PC-3 (cell line): ENCODE measurements at regions of chr14 and their contacts with region 1.

Region 1: DNA sequence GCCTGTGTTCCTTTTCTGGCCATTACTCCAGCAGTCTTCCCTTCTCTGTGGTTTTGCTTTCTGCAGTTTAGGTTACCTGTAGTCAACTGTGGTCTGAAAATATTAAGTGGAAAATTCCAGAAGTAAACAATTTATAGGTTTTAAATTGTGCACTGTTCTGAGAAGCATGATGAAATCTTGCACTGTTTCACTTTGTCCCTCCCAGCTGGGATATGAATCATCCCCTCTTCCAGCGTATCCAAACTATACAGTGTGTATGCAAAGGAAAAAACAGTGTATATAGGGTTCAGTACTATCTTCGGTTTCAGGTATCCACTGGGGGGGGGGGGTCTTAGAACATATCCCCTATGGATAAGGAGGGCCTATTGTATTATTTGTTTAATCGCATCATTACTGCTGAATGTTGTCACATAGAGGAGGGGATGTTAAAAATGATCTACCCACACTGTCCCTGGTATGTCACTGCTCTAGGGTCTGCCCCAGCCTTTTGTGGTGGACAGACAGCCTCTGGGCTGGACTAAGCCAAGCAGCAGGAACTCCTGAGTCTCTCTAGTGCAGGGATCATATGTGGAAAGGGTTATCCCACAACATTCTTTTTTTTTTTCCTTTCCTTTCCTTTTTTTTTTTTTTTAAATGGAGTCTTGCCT is 109.1 kb upstream of the MAX start:
- DNase-seq: peak; percentile 85
- ATAC-seq: peak; percentile 97
- H3K4me3 ChIP-seq: peak overlapping the region; percentile 20; the same call in 1 of the 2 replicates
- H3K27ac ChIP-seq: peak overlapping the region; percentile 51
- H3K4me1 ChIP-seq: peaks cover 31% of the 10 kb centered on the region
- H3K27me3 ChIP-seq: no peaks in the 10 kb centered on the region
- CTCF ChIP-seq: no peak

Region 2: DNA sequence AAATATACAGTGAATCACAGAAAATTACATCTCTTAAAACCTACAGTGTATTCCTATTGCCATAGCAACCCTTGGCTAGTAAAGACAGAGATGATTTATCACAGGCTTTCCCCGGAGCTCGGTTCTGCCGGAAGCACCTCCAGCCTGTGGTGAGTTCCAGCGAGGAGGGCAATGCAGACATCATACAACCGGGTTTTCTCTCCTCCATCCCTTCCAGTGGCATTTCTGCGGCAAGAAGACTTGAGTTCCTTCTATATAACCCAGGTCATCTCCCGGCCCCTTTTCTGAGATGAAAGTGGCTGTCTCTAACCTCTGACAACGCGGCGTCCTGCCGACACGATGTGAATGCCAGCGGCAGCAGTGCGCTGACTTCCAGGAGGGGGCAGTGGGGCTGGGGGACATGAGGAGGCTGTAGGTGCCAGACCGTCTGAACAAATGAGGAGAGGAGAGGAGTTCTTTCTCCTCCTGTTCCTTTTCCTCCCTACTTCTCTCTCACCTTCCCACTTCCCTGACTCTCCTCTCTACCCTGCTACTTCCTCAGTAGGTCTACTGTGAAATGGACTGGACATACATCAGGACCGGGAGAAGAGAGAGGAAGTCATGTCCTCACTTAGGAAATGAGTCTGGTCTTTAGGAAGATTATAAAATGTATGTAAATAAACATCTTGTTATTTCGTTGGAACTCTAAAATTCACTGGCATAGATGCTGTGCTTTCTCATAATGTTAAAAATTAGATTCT is 40.5 kb before region 1 on chr14:
- CTCF ChIA-PET with region 1: no interaction called
- POLR2A ChIA-PET with region 1: no interaction called
- intact Hi-C with region 1: loop called (anchors 2 kb)
- DNase-seq: peak; percentile 80
- ATAC-seq: peak; percentile 86
- H3K4me3 ChIP-seq: peak overlapping the region; percentile 65
- H3K27ac ChIP-seq: peak overlapping the region; percentile 56
- H3K4me1 ChIP-seq: peaks cover 18% of the 10 kb centered on the region
- H3K27me3 ChIP-seq: no peaks in the 10 kb centered on the region
- CTCF ChIP-seq: peak; percentile 76

Region 3: DNA sequence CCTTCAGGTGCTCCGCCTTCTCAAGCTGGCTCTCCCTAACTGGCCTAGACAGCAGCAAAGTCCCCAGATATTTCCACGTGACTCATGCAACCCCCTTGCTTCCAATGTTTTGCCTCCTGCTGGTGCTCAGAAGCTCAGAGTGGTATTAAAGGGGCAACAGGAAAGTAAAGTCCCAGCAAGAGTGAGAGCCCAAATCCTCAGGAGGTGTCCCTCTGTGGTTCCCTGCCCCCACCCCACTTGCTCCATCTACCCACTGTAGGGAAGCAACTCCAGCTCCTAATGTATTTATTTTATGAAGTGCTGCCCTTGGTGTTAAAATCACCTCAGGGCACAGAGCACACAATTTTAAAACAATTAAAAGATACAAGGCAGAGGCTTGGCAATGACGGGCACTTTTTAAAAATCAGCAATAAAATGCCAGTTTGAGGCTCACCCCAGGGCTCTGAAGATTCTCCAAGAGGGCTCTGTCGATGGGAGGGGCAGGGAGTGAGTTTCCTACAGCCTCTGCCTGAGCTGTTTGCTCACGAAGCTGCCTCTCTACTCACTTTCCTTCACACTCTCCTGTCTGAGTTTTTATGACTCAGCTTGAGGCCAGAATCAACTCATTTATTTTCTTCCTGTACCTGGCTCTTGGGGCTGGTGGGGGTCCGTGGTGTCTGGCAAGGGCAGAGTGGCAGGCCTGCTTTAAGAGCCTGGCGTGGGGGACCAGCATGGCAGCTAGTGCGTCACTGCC is 27.3 kb before region 1 on chr14:
- CTCF ChIA-PET with region 1: no interaction called
- POLR2A ChIA-PET with region 1: no interaction called
- intact Hi-C with region 1: loop called (anchors 2 kb)
- DNase-seq: peak; percentile 68
- ATAC-seq: peak; percentile 81
- H3K4me3 ChIP-seq: no peak overlapping the region
- H3K27ac ChIP-seq: no peak overlapping the region
- H3K4me1 ChIP-seq: peaks cover 26% of the 10 kb centered on the region
- H3K27me3 ChIP-seq: no peaks in the 10 kb centered on the region
- CTCF ChIP-seq: no peak

Region 4: GRCh38 chr14:65290830-65291229 is 79.4 kb after region 1 on chr14:
- CTCF ChIA-PET with region 1: no interaction called
- POLR2A ChIA-PET with region 1: no interaction called
- intact Hi-C with region 1: loop called (anchors 1 kb)
- DNase-seq: peak; percentile 99
- ATAC-seq: peak; percentile 95
- H3K4me3 ChIP-seq: no peak overlapping the region
- H3K27ac ChIP-seq: peak overlapping the region; percentile 96
- H3K4me1 ChIP-seq: peaks cover 20% of the 10 kb centered on the region
- H3K27me3 ChIP-seq: no peaks in the 10 kb centered on the region
- CTCF ChIP-seq: no peak

Region 5: GRCh38 chr14:65462411-65462810 is 250.9 kb after region 1 on chr14:
- CTCF ChIA-PET with region 1: no interaction called
- POLR2A ChIA-PET with region 1: no interaction called
- intact Hi-C with region 1: no loop called
- DNase-seq: peak; percentile 32
- ATAC-seq: peak; percentile 37
- H3K4me3 ChIP-seq: no peak overlapping the region
- H3K27ac ChIP-seq: no peak overlapping the region
- H3K4me1 ChIP-seq: peaks cover 13% of the 10 kb centered on the region
- H3K27me3 ChIP-seq: no peaks in the 10 kb centered on the region
- CTCF ChIP-seq: no peak

Region 6: DNA sequence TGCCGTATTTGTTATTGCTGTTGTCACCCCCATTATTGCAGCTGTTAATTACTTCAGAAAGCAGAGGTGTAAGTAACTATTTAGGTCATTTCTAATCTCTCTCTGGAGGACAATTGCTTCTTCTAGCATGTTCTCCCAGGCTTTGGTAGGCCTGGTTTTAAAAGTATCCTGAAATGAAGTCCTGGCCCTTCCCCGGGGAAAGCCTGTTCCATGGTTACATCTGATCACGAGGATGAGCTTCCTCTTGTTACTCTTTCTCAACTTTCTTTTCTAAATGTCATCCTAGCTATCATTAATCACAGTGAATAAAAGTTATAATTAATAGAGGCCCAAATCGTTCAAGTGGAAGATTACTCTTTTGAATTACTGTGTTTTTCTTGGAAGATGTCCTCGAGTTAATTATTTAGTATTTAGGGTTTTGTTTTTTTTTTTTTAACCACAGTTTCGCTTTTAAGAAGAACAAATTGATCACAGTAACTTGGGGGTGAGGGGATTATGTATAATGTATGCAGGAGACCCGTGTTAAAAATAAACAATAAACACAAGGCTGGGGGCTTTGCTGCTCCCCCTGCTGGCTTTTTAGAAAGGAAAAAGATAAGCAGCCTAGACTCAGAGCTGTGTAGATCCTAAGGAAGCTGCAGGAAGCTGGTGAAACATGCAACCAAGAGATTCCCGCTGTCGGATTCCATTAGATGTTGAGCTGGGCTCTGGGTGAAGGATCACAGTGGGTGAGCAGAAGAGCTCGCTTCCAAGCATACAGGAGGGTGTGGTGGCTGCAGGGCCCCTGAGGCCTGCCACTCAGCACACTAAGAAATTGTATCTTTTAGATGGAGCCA is 621.2 kb after region 1 on chr14:
- CTCF ChIA-PET with region 1: no interaction called
- POLR2A ChIA-PET with region 1: no interaction called
- intact Hi-C with region 1: loop called (anchors 5 kb)
- DNase-seq: peak; percentile 24
- ATAC-seq: peak; percentile 56; the same call in 1 of the 2 replicates
- H3K4me3 ChIP-seq: no peak overlapping the region
- H3K27ac ChIP-seq: no peak overlapping the region
- H3K4me1 ChIP-seq: no peaks in the 10 kb centered on the region
- H3K27me3 ChIP-seq: peaks cover 19% of the 10 kb centered on the region
- CTCF ChIP-seq: peak; percentile 56